Activated T-helper 1 cell treated with anti-CD3 and anti-CD28 coated beads, Interleukin-12 subunit alpha, Interleukin-12 subunit beta, Interleukin-2, Interleukin-4 antibody, amounts not matched to agents 30 ng/mL and 10 ng/mL and 1 ng/mL, durations not matched to agents 14 hours and 24 hours and 36 hours (primary cell): ENCODE measurements at regions of chr3 and their contacts with region 1.

Region 1: GRCh38 chr3:94349310-94349878 is 286.5 kb downstream of the NSUN3 start:
- DNase-seq: no peak
- H3K4me3 Mint-ChIP-seq: no peak overlapping the region
- H3K27ac Mint-ChIP-seq: no peak overlapping the region
- H3K4me1 Mint-ChIP-seq: no peaks in the 10 kb centered on the region
- H3K27me3 Mint-ChIP-seq: no peaks in the 10 kb centered on the region

Region 2: DNA sequence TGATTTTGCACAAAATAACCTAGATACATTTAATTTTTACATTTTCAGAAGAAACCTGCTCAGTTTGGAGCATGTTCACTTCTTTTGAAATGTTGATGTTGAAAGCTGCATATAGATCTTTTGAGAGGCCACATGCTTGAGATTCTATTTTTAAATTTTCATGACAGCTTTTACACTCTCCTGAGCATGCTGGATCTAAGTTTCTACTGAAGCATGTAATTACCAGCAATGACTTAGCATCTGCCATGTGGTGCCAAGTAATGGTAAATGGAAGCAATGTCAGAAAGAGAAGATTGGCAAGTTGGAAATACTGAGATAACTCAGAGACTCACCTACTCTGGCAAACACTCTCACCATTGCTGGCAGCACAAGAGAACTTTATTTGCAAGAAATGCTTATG is 24.1 kb after region 1 on chr3:
- intact Hi-C with region 1: loop called (anchors 1 kb)
- DNase-seq: no peak
- H3K4me3 Mint-ChIP-seq: no peak overlapping the region
- H3K27ac Mint-ChIP-seq: no peak overlapping the region
- H3K4me1 Mint-ChIP-seq: no peaks in the 10 kb centered on the region
- H3K27me3 Mint-ChIP-seq: no peaks in the 10 kb centered on the region

Region 3: GRCh38 chr3:94394885-94395284 is 45.5 kb after region 1 on chr3:
- intact Hi-C with region 1: no loop called
- DNase-seq: no peak
- H3K4me3 Mint-ChIP-seq: no peak overlapping the region
- H3K27ac Mint-ChIP-seq: no peak overlapping the region
- H3K4me1 Mint-ChIP-seq: no peaks in the 10 kb centered on the region
- H3K27me3 Mint-ChIP-seq: no peaks in the 10 kb centered on the region